Right ventricle myocardium superior (tissue), 1 donor: ENCODE measurements at regions of chr16 and their contacts with region 1.

Region 1: GRCh38 chr16:53130159-53131049 is 75.6 kb downstream of the CHD9 start:
- DNase-seq: peak; percentile 98
- ATAC-seq: peak; percentile 93

Region 2: GRCh38 chr16:53099318-53100130 is 30.9 kb before region 1 on chr16:
- intact Hi-C with region 1: loop called (anchors 2 kb)
- DNase-seq: peak; percentile 95
- ATAC-seq: peak; percentile 93

Region 3: DNA sequence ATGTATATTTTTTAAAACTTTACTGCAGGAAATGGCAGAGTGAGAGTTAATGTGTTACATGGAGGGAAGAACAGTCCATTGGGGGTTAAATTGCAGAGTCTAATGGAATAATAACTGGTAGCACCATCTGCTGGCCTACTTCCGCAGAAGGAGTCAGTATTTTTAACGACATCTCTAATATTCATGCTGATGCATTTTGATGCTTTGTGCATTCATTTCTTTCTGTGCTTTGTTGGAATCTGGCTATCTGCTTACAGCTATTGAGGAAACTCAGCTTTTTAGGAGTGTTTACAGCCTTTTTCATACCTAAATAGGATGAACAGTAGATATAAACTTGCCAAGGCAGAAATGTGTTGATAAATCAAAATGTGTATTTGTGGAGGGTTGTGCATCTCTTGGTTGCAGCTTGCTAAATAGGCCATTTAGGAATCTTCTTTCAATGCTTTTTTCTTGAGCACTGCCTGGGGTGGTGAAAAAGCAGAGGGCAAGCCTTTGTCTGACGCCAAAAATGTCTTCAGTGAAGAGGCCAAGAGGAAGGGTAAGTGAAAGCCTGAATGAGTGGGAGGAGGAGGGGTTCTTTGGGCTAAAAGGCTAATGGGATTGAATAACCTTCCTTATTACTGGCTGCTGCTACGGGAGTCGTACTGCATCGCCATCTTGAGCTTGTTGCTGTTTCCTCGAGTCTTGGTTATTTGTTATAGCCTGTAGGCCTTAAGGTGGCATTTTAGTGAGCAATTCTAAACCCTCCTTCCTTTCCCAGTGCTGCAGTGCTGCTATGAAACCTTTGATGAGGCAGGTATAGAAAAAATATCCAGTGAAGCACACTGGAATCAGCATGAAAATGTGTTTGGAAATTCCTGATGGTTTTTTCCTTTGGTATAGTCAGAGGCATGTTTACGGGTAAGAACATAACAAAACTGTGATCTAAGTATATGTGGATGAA is 77.7 kb after region 1 on chr16:
- intact Hi-C with region 1: loop called (anchors 10 kb)
- DNase-seq: no peak
- ATAC-seq: peak; percentile 96